Activated B cell treated with CpG ODN at 0.5 μM for 24 hours (primary cell): ENCODE measurements at regions of chr15 and their contacts with region 1.

Region 1: GRCh38 chr15:80567721-80568157 is 127.4 kb upstream of the ABHD17C start:
- DNase-seq: no peak
- ATAC-seq: no peak
- H3K4me3 Mint-ChIP-seq: no peak overlapping the region
- H3K27ac Mint-ChIP-seq: no peak overlapping the region
- H3K4me1 Mint-ChIP-seq: no peaks in the 10 kb centered on the region
- H3K27me3 Mint-ChIP-seq: peaks cover 13% of the 10 kb centered on the region
- CTCF ChIP-seq: no peak

Region 2: GRCh38 chr15:80856809-80857377 is 289.2 kb after region 1 on chr15:
- CTCF ChIA-PET with region 1: interaction called, 3 read pairs
- POLR2A ChIA-PET with region 1: no interaction called
- intact Hi-C with region 1: loop called (anchors 5 kb)
- DNase-seq: no peak
- ATAC-seq: no peak
- H3K4me3 Mint-ChIP-seq: no peak overlapping the region
- H3K27ac Mint-ChIP-seq: no peak overlapping the region
- H3K4me1 Mint-ChIP-seq: no peaks in the 10 kb centered on the region
- H3K27me3 Mint-ChIP-seq: no peaks in the 10 kb centered on the region
- CTCF ChIP-seq: no peak

Region 3: DNA sequence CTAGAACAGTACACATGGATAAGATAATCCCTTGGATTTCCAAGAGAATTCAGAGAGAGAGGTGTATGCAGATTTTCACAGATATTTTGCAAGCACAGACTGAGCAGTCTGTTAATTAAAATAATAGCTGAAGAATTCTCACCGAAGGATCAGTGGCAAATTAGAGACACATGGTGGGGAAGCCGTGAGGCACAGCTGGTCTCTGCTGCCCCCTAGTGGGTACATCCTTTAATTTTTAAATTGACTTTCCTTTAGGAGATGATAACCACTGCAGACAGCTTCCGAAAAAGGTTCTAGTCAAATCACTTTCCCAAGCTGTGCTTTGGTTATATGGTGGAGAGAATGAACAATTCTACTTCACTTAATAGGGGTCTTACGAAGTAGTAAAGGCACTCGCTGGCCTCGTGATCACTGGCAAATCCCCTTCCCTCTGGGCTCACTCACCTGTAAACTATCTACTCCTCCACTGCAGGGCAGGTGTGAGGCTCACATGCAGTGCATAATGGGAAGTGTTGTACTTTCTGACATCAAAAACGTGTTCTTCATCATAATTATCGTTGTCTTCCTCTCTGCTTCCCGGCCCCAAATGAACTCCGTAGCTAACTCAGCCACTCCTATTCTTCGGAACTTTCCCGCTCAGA is 402.4 kb after region 1 on chr15:
- CTCF ChIA-PET with region 1: interaction called, 16 read pairs
- POLR2A ChIA-PET with region 1: no interaction called
- intact Hi-C with region 1: no loop called
- DNase-seq: no peak
- ATAC-seq: peak; percentile 56
- H3K4me3 Mint-ChIP-seq: no peak overlapping the region
- H3K27ac Mint-ChIP-seq: no peak overlapping the region
- H3K4me1 Mint-ChIP-seq: peaks cover 9% of the 10 kb centered on the region
- H3K27me3 Mint-ChIP-seq: no peaks in the 10 kb centered on the region
- CTCF ChIP-seq: peak; percentile 91